Heart left ventricle (tissue), 16 donors: ENCODE measurements at regions of chr12 and their contacts with region 1.

Region 1: DNA sequence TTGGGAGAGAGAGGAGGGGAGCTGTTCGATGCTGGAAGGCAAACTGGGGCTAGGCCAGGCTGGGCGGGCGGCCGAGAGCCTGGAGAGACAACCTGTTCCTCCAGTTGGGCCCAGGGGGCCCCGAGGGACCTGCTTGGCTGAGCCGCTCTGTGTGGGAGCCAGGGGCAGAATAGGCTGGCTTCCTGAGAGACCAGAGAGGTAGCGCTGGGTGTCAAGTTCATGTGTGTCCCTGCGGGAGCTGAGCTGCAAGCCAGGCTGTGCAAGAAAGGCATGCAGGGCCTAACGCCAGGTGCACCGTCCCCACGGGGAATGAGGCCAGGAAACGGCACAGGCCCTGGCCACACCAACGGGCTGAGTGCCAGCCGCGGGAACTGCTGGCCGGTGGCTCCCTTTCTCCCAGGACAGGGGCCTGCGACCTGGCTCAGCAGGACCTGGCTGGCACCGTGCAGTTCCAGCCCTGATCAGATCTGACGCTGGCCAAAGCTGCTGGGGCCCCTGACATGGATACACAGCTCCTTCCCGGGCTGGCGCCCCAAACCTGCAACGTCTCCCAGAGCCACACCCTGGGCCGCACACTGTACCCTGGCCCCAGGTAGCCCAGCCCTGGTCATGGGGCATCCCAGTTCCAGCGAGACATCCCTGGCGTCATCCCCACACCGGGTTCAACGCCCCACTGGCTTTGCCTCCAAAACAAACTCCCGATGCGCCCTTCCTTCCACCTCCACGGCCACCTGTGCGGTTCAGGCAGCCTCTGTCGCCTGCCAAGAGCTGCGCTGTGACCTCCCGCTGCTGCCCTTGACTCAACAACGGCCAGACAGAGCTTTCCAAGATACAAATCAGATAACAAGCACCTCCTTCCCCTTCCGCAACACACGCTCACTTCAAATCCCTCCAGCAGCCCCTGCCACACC is 65.0 kb downstream of the RFLNA start:
- DNase-seq: peak; percentile 85 to 95 (median 92)
- ATAC-seq: peak; percentile 83 to 92 (median 90)
- H3K4me3 ChIP-seq: no peak overlapping the region
- H3K27ac ChIP-seq: peak overlapping the region in 11 of 12 donors; percentile 44 to 87 (median 64)
- H3K4me1 ChIP-seq: peaks cover 15 to 68% (median 45%) of the 10 kb centered on the region in 12 donors
- H3K27me3 ChIP-seq: no peaks in the 10 kb centered on the region
- CTCF ChIP-seq: no peak
- POLR2A ChIP-seq: no peak

Region 2: DNA sequence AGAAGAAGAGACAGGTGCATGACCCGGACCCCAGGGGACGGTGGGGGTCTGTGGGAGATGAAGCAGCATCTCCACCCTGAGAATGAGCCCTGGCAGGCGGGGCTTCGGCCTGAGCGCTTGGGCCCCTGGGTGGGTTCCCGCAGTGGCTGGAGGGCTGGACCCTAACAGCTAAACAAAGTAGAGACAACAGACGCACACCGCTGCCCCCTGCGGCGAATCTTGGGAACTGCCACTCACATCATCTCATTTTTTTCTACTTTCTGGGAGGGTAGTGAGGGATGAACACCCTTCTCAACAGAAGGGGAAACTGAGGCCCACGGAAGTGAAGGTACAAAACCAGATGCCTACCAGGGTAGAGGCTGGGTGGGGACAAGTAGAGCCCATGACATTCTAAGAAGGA is 39.7 kb after region 1 on chr12:
- intact Hi-C with region 1: loop called in 1 of 10 experiments (anchors 10 kb)
- DNase-seq: no peak
- ATAC-seq: no peak
- H3K4me3 ChIP-seq: no peak overlapping the region
- H3K27ac ChIP-seq: peak overlapping the region in 7 of 12 donors; percentile 49 to 96 (median 68)
- H3K4me1 ChIP-seq: peaks cover 16 to 79% (median 61%) of the 10 kb centered on the region in 12 donors
- H3K27me3 ChIP-seq: no peaks in the 10 kb centered on the region
- CTCF ChIP-seq: peak; percentile 47 to 76 (median 66)
- POLR2A ChIP-seq: no peak